PC-9 (cell line): ENCODE measurements at regions of chr7 and their contacts with region 1.

Region 1: DNA sequence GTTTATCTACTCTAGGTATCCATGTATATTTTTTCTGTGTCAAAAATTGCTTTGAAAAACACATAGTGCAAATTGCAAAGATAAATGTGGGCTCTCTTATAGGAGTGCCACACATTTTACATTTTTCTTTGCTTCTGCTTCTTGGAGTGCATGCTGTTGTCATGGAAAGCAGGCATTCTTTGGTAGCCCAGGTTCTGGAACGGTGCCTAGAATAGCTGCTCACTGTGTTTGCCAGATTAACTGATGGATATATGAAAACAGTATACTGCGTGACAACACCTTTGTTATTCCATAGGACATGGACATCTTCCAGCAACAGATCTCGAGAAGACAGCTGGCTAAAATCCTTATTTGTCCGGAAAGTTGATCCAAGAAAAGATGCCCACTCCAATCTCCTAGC is 13.4 kb downstream of the NIPSNAP2 start:
- DNase-seq: no peak
- H3K4me3 ChIP-seq: no peak overlapping the region
- H3K27ac ChIP-seq: no peak overlapping the region
- H3K4me1 ChIP-seq: 0 out of 2 replicates have a peak, but pooled peaks cover 3% of the 10 kb centered on the region
- H3K27me3 ChIP-seq: no peaks in the 10 kb centered on the region
- CTCF ChIP-seq: no peak

Region 2: GRCh38 chr7:55593515-55594318 is 384.1 kb before region 1 on chr7:
- CTCF ChIA-PET with region 1: interaction called, 10 read pairs
- POLR2A ChIA-PET with region 1: no interaction called
- intact Hi-C with region 1: no loop called
- DNase-seq: peak; percentile 77 to 82
- H3K4me3 ChIP-seq: no peak overlapping the region
- H3K27ac ChIP-seq: no peak overlapping the region
- H3K4me1 ChIP-seq: peaks cover 4% of the 10 kb centered on the region
- H3K27me3 ChIP-seq: no peaks in the 10 kb centered on the region
- CTCF ChIP-seq: peak; percentile 100

Region 3: GRCh38 chr7:55964261-55965099 is 13.4 kb before region 1 on chr7 and contains the start of gene NIPSNAP2:
- CTCF ChIA-PET with region 1: no interaction called
- POLR2A ChIA-PET with region 1: interaction called, 15 read pairs
- intact Hi-C with region 1: no loop called
- DNase-seq: peak; percentile 63 to 89
- H3K4me3 ChIP-seq: peak within 1 kb of the TSS; percentile 67
- H3K27ac ChIP-seq: peak within 1 kb of the TSS; percentile 54
- H3K4me1 ChIP-seq: peaks cover 19% of the 10 kb centered on the region
- H3K27me3 ChIP-seq: no peaks in the 10 kb centered on the region
- CTCF ChIP-seq: peak; percentile 64
- total RNA-seq, gene NIPSNAP2: 96.1 and 97.5 TPM in 2 replicates

Region 4: DNA sequence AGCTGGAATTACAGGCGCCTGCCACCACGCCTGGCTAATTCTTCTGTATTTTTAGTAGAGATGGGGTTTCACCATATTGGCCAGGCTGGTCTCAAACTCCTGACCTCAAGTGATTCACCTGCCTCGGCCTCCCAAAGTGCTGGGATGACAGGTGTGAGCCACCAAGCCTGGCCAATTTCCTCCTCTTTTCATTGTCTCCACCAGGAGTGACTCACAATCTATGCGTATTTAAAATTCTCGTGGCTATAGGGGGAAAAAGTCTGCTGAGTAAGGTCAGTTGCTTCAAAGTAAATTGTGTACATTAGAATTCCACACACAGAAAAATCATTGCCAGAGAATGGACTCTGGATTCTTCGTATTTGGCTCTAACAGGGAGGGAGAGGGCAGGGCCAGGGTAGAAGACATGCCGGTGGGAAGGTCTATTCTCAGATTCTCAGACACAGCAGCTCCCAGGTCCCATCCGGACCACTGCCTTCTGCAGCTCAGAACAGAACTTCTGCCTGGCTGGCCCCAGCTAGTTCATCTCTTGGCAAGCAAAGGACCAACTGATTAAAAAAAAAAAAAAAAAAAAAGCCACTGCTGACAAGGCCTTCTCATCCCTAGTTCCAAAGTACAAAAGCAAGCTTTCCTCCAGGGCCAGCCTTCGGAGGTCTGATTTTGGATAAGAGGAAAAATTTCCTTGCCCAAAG is 51.3 kb after region 1 on chr7:
- CTCF ChIA-PET with region 1: no interaction called
- POLR2A ChIA-PET with region 1: no interaction called
- intact Hi-C with region 1: no loop called
- DNase-seq: peak in 1 of 2 experiments; percentile 71
- H3K4me3 ChIP-seq: no peak overlapping the region
- H3K27ac ChIP-seq: 0 out of 2 replicates have a peak overlapping the region, but pooled peaks have one; percentile 10
- H3K4me1 ChIP-seq: peaks cover 5% of the 10 kb centered on the region
- H3K27me3 ChIP-seq: no peaks in the 10 kb centered on the region
- CTCF ChIP-seq: no peak

Region 5: DNA sequence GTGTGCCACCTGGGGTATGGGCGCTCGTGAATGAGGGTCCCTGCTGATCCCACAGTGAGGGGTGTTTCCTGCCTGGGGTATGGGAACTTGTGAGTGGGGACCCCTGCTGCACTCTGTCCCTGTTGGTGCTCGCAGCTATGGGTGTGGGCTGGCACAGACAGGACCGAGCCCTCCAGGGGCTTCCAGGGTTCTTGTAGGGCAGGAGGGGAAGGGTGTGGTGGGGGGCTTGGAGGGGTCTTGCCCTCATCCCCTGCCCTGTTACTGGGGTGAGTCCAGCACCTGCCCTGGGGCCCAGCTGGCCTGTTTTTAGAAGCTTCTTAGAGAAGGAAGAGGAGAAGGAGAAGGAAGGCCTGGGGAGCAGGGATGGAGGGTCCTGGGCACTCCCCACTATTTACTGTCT is 515.4 kb after region 1 on chr7:
- CTCF ChIA-PET with region 1: no interaction called
- POLR2A ChIA-PET with region 1: no interaction called
- intact Hi-C with region 1: no loop called
- DNase-seq: no peak
- H3K4me3 ChIP-seq: no peak overlapping the region
- H3K27ac ChIP-seq: no peak overlapping the region
- H3K4me1 ChIP-seq: no peaks in the 10 kb centered on the region
- H3K27me3 ChIP-seq: no peaks in the 10 kb centered on the region
- CTCF ChIP-seq: no peak